ENCODE measurements at regions of chr17 and their contacts with region 1.

Region 1: DNA sequence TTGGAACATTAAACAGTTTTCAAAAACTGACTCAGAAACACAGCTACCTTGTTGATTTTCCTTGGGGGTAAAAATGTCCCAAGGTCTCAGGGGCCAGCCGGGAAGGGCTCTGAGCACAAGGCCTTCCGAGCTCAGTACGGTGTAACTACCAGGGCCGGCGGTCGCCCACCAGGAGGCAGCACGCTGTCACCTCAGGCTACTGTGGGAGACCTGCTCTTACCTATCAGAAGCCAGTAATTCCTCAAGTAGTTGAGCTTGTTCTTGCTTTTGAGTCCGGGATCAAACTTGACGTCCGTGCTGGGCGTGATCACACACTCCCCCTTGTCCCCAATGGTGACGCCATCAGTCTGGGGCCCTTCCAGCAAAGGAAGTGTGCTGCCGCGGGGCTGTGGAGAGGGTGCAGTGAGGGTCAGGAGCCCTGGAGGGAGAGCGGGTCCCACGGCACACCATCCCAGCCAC is 43.4 kb upstream of the ICAM2 start:
- DNase-seq: peak; percentile 74
- H3K4me3 Mint-ChIP-seq: peak overlapping the region; percentile 64
- H3K27ac Mint-ChIP-seq: peak overlapping the region; percentile 93
- H3K4me1 Mint-ChIP-seq: peaks cover 88% of the 10 kb centered on the region
- H3K27me3 Mint-ChIP-seq: no peaks in the 10 kb centered on the region

Region 2: GRCh38 chr17:63974594-63975192 is 89.1 kb before region 1 on chr17:
- CTCF ChIA-PET with region 1: no interaction called
- POLR2A ChIA-PET with region 1: no interaction called
- intact Hi-C with region 1: no loop called
- DNase-seq: peak; percentile 28
- H3K4me3 Mint-ChIP-seq: no peak overlapping the region
- H3K27ac Mint-ChIP-seq: no peak overlapping the region
- H3K4me1 Mint-ChIP-seq: peaks cover 17% of the 10 kb centered on the region
- H3K27me3 Mint-ChIP-seq: no peaks in the 10 kb centered on the region

Region 3: GRCh38 chr17:63993368-63993985 is 70.3 kb before region 1 on chr17:
- CTCF ChIA-PET with region 1: no interaction called
- POLR2A ChIA-PET with region 1: no interaction called
- intact Hi-C with region 1: no loop called
- DNase-seq: peak; percentile 33
- H3K4me3 Mint-ChIP-seq: no peak overlapping the region
- H3K27ac Mint-ChIP-seq: no peak overlapping the region
- H3K4me1 Mint-ChIP-seq: peaks cover 30% of the 10 kb centered on the region
- H3K27me3 Mint-ChIP-seq: no peaks in the 10 kb centered on the region

Region 4: GRCh38 chr17:64020056-64020766 is 43.6 kb before region 1 on chr17 and contains the start of gene ICAM2:
- CTCF ChIA-PET with region 1: interaction called, 14 read pairs
- POLR2A ChIA-PET with region 1: interaction called, 15 read pairs
- intact Hi-C with region 1: loop called (anchors 1 kb)
- DNase-seq: peak; percentile 95
- H3K4me3 Mint-ChIP-seq: peak within 1 kb of the TSS; percentile 93
- H3K27ac Mint-ChIP-seq: peak within 1 kb of the TSS; percentile 98
- H3K4me1 Mint-ChIP-seq: peaks cover 64% of the 10 kb centered on the region
- H3K27me3 Mint-ChIP-seq: no peaks in the 10 kb centered on the region
- total RNA-seq, gene ICAM2: 65.0 to 66.7 TPM

Region 5: GRCh38 chr17:64036198-64036922 is 27.4 kb before region 1 on chr17:
- CTCF ChIA-PET with region 1: no interaction called
- POLR2A ChIA-PET with region 1: no interaction called
- intact Hi-C with region 1: no loop called
- DNase-seq: no peak
- H3K4me3 Mint-ChIP-seq: no peak overlapping the region
- H3K27ac Mint-ChIP-seq: peak overlapping the region; percentile 28
- H3K4me1 Mint-ChIP-seq: peaks cover under 1% of the 10 kb centered on the region
- H3K27me3 Mint-ChIP-seq: no peaks in the 10 kb centered on the region

Region 6: GRCh38 chr17:64081802-64082799 is 18.3 kb after region 1 on chr17:
- CTCF ChIA-PET with region 1: interaction called, 54 read pairs
- POLR2A ChIA-PET with region 1: interaction called, 12 read pairs
- intact Hi-C with region 1: loop called (anchors 1 kb)
- DNase-seq: peak; percentile 74
- H3K4me3 Mint-ChIP-seq: peak overlapping the region; percentile 49
- H3K27ac Mint-ChIP-seq: no peak overlapping the region
- H3K4me1 Mint-ChIP-seq: peaks cover 29% of the 10 kb centered on the region
- H3K27me3 Mint-ChIP-seq: no peaks in the 10 kb centered on the region

Region 7: DNA sequence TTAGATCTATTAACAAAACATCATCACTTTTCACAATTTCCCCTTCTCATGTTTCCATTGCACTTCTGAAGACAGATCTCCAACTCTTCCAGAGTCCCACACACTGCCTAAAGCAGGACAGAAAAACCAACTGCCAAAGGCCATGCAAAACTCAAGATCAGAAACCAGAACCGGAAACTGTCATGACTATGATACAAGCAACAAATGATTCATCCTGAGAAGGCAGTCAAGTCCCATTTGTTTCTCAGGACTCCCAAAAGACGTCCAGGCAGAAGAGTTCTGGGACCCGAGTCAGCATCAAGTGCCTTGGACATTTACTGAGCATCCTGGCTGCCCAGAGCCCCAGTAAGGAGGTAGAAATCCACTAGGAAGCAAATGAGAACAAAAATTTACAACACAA is 27.3 kb after region 1 on chr17:
- CTCF ChIA-PET with region 1: interaction called, 54 read pairs
- POLR2A ChIA-PET with region 1: interaction called, 5 read pairs
- intact Hi-C with region 1: loop called (anchors 1 kb)
- DNase-seq: peak; percentile 46
- H3K4me3 Mint-ChIP-seq: peak overlapping the region; percentile 68
- H3K27ac Mint-ChIP-seq: peak overlapping the region; percentile 95
- H3K4me1 Mint-ChIP-seq: peaks cover 89% of the 10 kb centered on the region
- H3K27me3 Mint-ChIP-seq: no peaks in the 10 kb centered on the region

Region 8: GRCh38 chr17:64117981-64118979 is 54.5 kb after region 1 on chr17:
- CTCF ChIA-PET with region 1: interaction called, 13 read pairs
- POLR2A ChIA-PET with region 1: interaction called, 3 read pairs
- intact Hi-C with region 1: loop called (anchors 1 kb)
- DNase-seq: no peak
- H3K4me3 Mint-ChIP-seq: no peak overlapping the region
- H3K27ac Mint-ChIP-seq: peak overlapping the region; percentile 71
- H3K4me1 Mint-ChIP-seq: peaks cover 78% of the 10 kb centered on the region
- H3K27me3 Mint-ChIP-seq: no peaks in the 10 kb centered on the region